ENCODE measurements at regions of chr2 and their contacts with region 1.

Region 1: DNA sequence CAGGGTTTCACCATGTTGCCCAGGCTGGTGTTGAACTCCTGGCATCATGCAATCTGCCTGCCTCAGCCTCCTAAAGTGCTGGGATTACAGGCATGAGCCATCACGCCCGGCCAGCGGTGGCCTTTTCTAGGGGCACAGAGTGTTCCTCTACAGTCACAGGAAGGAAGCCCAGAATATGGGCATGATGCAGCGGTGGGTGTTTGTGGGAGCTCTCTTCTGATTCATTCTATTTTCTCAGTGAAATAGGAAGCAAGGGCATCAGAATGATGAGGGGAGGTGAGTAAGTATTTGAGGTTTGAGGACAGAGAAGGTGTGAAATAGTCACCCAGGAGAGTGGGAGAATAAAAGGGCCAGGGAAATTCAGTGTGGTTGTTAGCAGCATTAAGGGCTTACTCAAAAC is 70.3 kb upstream of the PSME4 start:
- DNase-seq: peak; percentile 79
- H3K4me3 Mint-ChIP-seq: no peak overlapping the region
- H3K27ac Mint-ChIP-seq: no peak overlapping the region
- H3K4me1 Mint-ChIP-seq: peaks cover 3% of the 10 kb centered on the region
- H3K27me3 Mint-ChIP-seq: no peaks in the 10 kb centered on the region

Region 2: GRCh38 chr2:53317863-53318262 is 723.3 kb before region 1 on chr2:
- CTCF ChIA-PET with region 1: no interaction called
- POLR2A ChIA-PET with region 1: no interaction called
- intact Hi-C with region 1: no loop called
- DNase-seq: no peak
- H3K4me3 Mint-ChIP-seq: no peak overlapping the region
- H3K27ac Mint-ChIP-seq: no peak overlapping the region
- H3K4me1 Mint-ChIP-seq: no peaks in the 10 kb centered on the region
- H3K27me3 Mint-ChIP-seq: no peaks in the 10 kb centered on the region

Region 3: DNA sequence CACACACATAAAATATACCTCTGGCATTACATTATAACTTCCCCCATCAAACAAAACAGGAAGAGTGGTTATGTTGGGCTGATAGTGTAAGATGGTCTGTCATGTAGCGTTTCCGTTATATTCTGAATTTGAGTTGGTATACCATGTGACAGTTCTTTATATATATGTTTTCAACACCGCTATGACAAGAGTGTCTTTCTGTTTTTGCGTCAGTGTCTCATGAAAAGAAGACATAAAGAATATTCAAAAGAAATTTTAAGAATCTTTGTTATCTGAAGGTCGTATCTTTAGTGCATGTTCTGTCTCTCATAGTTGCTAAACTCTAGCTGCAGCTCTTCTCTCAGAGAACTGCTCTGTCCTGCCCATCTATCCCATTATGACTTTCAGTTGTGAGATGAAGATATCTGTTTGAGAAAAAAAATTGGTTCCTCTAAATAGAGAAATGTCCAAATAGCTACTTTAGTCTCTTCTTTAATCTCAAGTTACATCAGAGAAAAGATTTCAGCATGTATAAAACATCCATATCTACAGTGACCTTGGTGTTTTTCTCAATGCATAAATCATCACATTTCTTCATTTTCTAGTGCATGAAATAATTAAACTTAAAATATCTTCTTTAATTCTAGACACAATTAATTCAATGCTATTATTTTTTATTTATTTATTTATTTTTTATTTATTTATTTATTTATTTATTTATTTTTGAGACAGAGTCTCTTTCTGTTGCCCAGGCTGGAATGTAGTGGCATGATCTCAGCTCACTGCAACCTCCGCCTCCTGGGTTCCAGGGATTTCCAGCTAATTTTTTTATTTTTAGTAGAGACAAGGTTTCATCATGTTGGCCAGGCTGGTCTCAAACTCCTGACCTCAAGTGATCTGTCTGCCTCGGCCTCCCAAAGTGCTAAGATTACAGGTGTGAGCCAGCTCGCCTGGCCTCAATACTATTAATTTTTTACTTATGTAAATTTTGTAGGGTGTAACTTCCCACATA is 46.0 kb before region 1 on chr2:
- CTCF ChIA-PET with region 1: interaction called, 3 read pairs
- POLR2A ChIA-PET with region 1: interaction called, 4 read pairs
- intact Hi-C with region 1: loop called (anchors 1 kb)
- DNase-seq: no peak
- H3K4me3 Mint-ChIP-seq: peak overlapping the region; percentile 33
- H3K27ac Mint-ChIP-seq: peak overlapping the region; percentile 46
- H3K4me1 Mint-ChIP-seq: peaks cover 17% of the 10 kb centered on the region
- H3K27me3 Mint-ChIP-seq: no peaks in the 10 kb centered on the region

Region 4: DNA sequence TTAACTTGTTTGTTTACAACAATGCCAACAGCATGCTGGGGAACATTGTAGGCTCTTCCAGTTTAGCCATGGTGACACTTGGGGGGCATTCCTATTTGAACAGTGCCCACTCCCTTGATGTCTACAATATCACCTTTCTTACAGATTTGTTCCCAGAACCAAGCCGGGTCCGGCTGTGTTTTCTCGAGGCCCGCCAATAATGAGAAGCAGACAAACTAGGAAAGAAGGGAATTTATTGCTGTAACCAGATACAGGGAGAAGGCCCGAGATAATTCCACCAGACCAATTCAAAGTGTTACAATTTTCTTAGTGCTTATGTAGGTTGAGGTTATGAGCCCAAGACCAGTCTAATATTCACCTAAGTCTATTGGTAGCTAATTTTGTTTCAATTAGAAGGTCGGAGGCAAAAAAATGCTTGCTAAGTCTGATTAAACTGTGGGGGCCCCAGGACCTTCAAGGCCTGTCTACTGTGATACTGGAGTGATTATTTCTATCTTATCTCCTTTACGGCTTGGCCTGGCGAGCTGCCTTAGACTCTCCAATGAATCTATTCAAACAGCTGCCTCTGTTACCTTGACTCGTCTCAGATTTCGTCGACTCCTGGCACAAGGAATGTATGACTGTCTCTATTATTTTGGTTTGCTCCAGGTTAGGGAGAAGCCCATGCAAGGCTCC is 11.3 kb before region 1 on chr2:
- CTCF ChIA-PET with region 1: no interaction called
- POLR2A ChIA-PET with region 1: no interaction called
- intact Hi-C with region 1: no loop called
- DNase-seq: no peak
- H3K4me3 Mint-ChIP-seq: no peak overlapping the region
- H3K27ac Mint-ChIP-seq: no peak overlapping the region
- H3K4me1 Mint-ChIP-seq: no peaks in the 10 kb centered on the region
- H3K27me3 Mint-ChIP-seq: no peaks in the 10 kb centered on the region

Region 5: DNA sequence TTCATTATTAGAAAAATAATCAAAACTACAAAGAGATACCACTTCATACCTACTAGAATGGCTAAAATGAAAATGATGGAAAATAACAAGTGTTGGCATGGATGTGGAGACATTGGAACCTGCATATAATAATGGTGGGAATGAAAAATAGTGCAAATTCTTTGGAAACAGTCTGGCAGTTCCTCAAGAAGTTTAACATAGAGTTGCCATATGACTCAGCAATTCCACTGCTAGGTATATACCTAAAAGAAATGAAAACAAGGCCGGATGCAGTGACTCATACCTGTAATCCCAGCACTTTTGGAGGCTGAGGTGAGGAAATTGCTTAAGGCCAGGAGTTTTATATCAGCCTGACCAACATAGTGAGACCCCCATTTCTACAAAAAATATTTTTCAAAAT is 32.7 kb after region 1 on chr2:
- CTCF ChIA-PET with region 1: no interaction called
- POLR2A ChIA-PET with region 1: interaction called, 3 read pairs
- intact Hi-C with region 1: loop called (anchors 1 kb)
- DNase-seq: peak; percentile 37
- H3K4me3 Mint-ChIP-seq: no peak overlapping the region
- H3K27ac Mint-ChIP-seq: no peak overlapping the region
- H3K4me1 Mint-ChIP-seq: peaks cover 17% of the 10 kb centered on the region
- H3K27me3 Mint-ChIP-seq: no peaks in the 10 kb centered on the region

Region 6: DNA sequence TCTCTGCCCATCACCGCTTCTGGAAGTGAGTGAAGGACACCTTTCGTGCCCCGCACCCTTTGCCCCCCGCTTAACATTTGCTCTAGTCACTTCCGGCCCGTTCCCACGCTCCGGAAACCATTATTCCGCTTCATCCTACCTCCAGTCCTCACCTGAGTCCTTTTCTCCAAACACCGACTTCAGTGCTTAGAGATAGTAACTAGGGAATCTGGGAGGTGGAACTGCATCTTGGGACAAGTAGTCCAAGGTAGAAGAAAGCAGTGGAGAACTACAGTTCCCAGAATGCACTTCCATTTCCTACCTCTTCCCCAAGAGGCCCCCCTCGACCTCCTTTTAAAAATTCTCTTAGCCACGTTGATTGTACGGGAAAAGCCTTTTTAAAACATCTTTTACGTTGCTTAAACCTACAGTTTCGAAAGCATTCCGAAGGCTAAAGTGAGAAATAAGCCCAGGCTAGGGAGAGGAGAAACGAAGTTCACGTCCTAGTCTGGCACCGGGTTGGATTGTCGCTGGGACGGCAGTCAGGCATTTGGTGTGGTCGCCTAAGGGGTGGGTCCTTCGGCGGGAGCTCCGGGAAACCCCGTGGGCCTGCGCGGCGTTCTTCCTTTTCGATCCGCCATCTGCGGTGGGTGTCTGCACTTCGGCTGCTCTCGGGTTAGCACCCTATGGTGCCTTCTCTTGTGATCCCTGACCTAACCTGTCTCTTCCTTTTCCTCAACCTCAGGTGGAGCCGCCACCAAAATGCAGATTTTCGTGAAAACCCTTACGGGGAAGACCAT is 1191.1 kb after region 1 on chr2 and contains the starts of genes CLHC1 and RPS27A:
- CTCF ChIA-PET with region 1: no interaction called
- POLR2A ChIA-PET with region 1: no interaction called
- intact Hi-C with region 1: no loop called
- DNase-seq: peak; percentile 95
- H3K4me3 Mint-ChIP-seq: peak within 1 kb of the TSS; percentile 96
- H3K27ac Mint-ChIP-seq: peak within 1 kb of the TSS; percentile 94
- H3K4me1 Mint-ChIP-seq: peaks cover 60% of the 10 kb centered on the region
- H3K27me3 Mint-ChIP-seq: no peaks in the 10 kb centered on the region
- total RNA-seq, gene CLHC1: 5.5 to 7.5 TPM
- total RNA-seq, gene RPS27A: 1,372 to 1,402 TPM

Measured in activated CD4-positive, alpha-beta memory T cell treated with anti-CD3 and anti-CD28 coated beads for 36 hours (primary cell).